ENCODE measurements at regions of chr13 and their contacts with region 1.

Region 1: DNA sequence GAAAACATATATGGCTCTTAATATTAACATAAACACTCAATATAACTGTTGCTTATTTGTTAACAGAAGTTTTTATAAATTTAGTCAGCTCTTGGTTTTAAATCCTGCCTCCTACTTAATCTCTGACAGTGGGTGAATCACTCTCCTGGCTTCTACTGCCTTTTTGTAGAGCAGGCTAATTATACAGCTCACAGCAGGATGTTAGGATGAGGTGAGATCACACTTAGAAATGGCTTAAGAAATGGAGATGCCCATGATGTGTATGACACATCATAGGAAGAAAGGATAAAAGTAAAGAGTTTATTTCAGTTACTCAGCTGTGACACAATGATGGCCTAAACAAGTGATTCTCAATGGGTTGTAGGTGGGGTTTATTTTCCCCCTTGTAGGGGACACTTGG is 345.6 kb downstream of the SPRY2 start:
- DNase-seq: no peak
- H3K4me3 ChIP-seq: no peak overlapping the region
- H3K4me3 Mint-ChIP-seq: no peak overlapping the region
- H3K27ac Mint-ChIP-seq: no peak overlapping the region
- H3K4me1 ChIP-seq: peaks cover 14% of the 10 kb centered on the region
- H3K4me1 Mint-ChIP-seq: peaks cover 18% of the 10 kb centered on the region
- H3K27me3 ChIP-seq: no peaks in the 10 kb centered on the region
- H3K27me3 Mint-ChIP-seq: no peaks in the 10 kb centered on the region
- CTCF ChIP-seq: no peak

Region 2: DNA sequence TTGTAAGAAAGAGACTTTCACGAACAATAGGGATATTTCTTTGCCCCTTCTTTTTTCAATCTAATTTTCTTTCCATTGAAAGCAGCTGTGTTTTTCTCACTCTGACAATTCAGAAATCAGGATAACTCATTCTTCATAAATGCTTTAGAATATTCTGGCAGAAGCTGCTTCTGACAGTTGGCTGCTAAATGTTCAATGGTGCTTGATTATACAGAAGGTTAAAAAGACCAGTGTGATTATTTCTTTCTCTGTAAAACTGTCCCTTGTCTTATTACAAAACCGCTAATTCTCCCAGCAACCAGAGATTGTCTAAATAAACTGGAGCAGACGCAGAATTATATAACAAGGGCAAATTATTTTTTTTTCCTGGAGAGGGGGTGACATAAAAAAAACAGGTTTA is 48.8 kb before region 1 on chr13:
- CTCF ChIA-PET with region 1: no interaction called
- POLR2A ChIA-PET with region 1: no interaction called
- intact Hi-C with region 1: loop called (anchors 5 kb)
- DNase-seq: no peak
- H3K4me3 ChIP-seq: no peak overlapping the region
- H3K4me3 Mint-ChIP-seq: no peak overlapping the region
- H3K27ac Mint-ChIP-seq: no peak overlapping the region
- H3K4me1 ChIP-seq: no peaks in the 10 kb centered on the region
- H3K4me1 Mint-ChIP-seq: no peaks in the 10 kb centered on the region
- H3K27me3 ChIP-seq: no peaks in the 10 kb centered on the region
- H3K27me3 Mint-ChIP-seq: no peaks in the 10 kb centered on the region
- CTCF ChIP-seq: no peak

Region 3: GRCh38 chr13:80571346-80572307 is 576.3 kb after region 1 on chr13:
- CTCF ChIA-PET with region 1: no interaction called
- POLR2A ChIA-PET with region 1: no interaction called
- intact Hi-C with region 1: no loop called
- DNase-seq: no peak
- H3K4me3 ChIP-seq: no peak overlapping the region
- H3K4me3 Mint-ChIP-seq: no peak overlapping the region
- H3K27ac Mint-ChIP-seq: no peak overlapping the region
- H3K4me1 ChIP-seq: no peaks in the 10 kb centered on the region
- H3K4me1 Mint-ChIP-seq: no peaks in the 10 kb centered on the region
- H3K27me3 ChIP-seq: peaks cover 1% of the 10 kb centered on the region; the same call in 1 of the 2 replicates
- H3K27me3 Mint-ChIP-seq: peaks cover 17% of the 10 kb centered on the region
- CTCF ChIP-seq: no peak

Measured in Caco-2 (cell line).